Posterior cingulate gyrus (tissue), 11 donors: ENCODE measurements at regions of chr9 and their contacts with region 1.

Region 1: GRCh38 chr9:36632892-36633291 is 60.2 kb downstream of the MELK start:
- DNase-seq: no peak

Region 2: DNA sequence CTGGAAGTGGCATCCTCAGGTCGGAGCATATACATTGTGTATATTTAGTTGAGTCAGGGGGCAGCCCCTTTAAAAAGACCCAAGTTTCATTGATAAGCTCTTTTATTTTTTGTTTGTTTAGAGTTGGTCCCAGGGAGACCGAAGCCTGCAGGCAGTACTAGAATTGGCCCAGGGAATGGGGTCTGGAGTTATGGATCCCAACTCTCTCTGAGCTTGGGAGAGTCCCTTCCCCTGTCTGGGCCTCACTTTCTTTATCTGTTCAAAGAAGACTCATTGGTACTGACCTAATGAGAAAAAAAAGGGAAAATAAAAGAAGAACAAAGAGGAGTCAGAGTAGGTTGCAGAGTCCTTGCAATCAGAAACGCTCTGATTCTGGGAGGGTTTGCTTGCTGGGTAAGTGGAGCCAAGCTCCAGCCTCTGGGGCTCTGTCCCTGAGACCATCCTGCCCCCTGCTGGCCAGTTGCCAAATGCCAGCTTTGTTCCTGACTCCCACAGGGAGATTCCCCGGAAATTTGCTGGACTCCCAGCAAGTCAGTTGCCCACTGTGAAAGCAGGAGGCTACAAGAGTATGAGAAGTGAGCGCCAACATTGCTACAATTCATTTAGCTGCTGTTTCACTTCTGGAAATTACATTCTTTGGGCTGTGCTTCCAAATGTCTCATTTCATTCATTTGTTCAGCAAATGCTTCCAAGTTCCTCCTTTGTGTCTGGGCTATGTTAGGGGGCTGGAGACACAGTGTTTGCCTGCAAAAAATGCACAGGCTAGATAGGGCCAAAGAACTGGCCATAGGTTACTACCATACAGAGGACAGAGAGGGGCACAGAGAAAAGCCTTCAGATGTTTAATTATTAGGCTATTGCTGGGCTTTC is 96.0 kb after region 1 on chr9:
- intact Hi-C with region 1: loop called (anchors 10 kb)
- DNase-seq: peak in 9 of 10 donors; percentile 21 to 92 (median 62)

Region 3: GRCh38 chr9:36935768-36936497 is 303.0 kb after region 1 on chr9:
- intact Hi-C with region 1: no loop called
- DNase-seq: no peak